ENCODE measurements at regions of chr11 and their contacts with region 1.

Region 1: DNA sequence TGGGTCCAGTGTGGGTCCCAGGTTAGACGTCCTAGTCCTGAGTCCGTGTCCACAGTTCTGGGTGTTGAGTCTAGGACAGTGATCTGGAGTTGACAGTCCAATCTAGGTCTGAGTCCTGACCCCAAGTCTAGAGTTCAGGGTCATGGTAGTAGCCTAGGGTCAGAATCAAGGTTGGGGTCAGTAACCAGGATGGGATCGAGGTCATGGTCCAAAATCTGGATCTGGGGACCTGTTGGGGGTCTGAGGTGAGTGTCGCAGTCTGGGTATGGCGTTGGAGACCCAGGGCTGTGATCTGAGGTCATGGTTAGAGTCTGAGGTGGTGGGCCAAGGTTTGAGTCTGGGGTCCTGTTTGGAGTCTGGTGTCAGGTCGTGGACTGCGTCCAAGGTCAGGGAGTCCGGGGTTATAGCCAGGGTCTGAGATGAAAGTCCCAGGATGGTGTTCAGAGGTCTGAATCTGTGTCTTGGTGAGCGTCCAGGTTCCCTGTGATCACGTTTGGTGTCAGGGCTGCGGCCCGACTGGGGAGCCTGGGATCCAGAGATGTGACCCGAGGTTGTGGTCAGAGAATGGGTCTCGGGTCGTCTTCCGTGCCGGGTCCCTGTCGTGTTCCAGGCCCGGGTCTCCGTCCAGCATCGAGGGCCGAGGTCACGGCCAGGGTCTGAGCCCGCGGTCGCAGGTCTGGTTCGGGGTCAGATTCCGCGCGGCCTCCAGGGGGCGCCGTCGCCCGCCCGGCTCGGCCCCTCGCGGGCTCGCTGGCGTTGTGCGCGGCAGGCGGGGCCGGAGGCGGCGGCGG is 445 bp upstream of the GRK2 start:
- DNase-seq: peak; percentile 90
- ATAC-seq: peak; percentile 74

Region 2: DNA sequence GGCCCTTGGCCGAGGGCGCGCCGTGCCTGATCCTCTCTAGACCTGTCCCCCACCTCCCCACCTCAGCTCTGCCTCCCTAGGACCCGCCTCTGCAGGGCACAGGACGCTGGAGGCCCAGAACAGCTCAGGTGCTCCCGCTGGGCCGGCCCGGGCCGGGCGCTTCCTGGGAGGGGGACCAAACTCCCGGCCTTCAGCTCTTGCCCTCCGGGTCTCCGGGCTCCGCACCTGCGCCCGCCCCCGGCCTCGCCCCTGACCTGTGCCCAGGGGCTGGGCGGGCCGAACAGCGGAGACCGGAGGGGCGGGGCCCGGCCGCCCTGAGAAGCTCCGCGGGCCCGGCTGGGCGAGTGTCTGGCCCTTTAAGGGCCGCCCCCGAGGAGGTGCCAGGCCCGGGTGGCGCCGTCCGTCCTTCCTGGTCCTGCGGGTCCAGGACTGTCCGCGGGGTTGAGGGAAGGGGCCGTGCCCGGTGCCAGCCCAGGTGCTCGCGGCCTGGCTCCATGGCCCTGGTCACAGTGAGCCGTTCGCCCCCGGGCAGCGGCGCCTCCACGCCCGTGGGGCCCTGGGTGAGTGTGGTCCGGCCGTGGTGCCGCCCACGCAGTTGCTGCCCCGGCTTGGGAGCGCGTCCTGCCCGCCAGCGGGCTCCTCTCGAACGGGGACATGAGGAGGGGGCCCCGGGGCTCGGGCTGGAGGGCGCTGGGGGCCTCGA is 37.5 kb after region 1 on chr11 and contains the start of gene SSH3:
- intact Hi-C with region 1: loop called (anchors 5 kb)
- DNase-seq: peak; percentile 90
- ATAC-seq: peak; percentile 93
- total RNA-seq, gene SSH3: 12.1 TPM

Region 3: DNA sequence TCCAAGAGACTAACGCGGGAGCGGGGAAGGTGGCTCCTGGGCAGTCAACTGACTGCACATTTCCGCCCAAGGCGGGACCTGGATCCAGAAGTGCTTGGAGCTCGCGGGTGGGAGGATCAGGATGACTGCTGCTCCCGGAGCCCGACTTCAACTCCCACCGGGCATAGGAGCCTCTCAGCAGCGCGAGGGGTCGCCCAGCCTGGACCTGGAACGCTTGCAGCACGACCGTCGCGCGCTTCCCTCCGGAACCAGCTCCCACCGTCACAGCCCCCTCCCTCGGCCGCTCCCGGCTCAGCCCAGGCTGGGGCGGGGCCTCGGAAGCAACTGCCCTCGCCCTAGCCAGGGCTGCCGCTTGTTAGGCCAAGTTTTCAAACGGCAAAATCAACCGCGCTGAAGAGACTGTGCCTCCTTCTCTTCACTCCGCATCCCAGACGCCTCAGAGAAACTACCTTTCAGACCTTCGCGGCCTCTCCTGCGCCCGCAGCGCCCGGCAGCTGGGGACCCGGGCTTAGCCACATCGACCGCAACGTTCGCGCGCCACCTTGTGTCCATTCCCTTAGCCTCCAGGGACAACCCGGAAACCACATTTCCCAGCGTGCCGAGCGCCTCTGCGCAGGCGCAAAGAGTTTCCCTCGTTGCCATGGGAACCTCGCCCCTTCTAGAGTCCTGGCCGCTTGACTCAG is 51.5 kb after region 1 on chr11:
- intact Hi-C with region 1: loop called (anchors 1 kb)
- DNase-seq: peak; percentile 97
- ATAC-seq: peak; percentile 96